Heart right ventricle (tissue), 16 donors: ENCODE measurements at regions of chr15 and their contacts with region 1.

Region 1: DNA sequence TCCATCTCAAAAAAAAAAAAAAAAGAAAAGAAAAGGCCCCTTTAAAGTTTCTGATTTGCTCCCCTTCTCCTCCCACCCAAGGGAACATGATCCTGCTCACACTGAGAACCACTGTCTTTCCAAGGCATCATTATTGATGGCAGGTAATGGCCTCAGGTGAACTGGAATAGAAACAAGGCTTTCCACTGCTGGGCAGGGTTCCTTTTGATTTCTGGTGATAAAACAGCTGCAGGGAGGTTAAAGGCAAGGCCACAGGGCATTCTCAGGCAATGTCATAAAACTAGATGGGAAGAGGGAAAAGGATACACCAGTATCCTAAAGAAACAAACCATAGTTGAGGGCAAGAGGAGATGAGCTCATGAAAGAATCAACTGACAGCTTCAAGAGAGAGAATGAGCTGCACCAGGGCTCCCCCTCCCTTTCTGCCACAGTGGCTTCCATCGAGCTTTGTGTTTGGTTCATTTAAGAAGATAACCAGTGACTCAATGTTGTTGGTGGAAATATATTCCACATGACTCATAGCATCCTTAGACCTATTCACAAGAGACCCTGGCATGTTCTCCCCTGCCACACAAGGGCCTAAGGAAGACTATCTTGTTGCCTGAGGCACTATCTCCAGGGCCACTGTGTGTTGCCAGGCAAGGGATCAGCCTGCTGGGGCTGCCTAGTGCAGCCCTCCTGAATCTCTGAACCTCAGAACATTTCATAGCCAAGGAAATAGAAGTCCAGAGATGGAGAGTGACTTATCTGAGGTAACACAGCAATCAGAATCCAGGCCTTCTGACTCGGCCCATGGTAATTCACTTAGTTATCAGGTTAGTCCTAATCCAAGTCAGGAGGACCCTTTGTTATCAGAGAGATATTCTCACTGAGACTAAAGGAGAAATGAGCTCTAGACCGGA is 86.5 kb downstream of the WDR76 start:
- DNase-seq: peak in 1 of 2 donors; percentile 65
- ATAC-seq: peak; percentile 45 to 96 (median 90)
- H3K4me3 ChIP-seq: no peak overlapping the region
- H3K27ac ChIP-seq: peak overlapping the region in 7 of 10 donors; percentile 26 to 85 (median 63)
- H3K4me1 ChIP-seq: peaks cover 4 to 56% (median 20%) of the 10 kb centered on the region in 9 donors
- H3K27me3 ChIP-seq: no peaks in the 10 kb centered on the region
- CTCF ChIP-seq: no peak

Region 2: GRCh38 chr15:43872416-43873020 is 40.8 kb before region 1 on chr15:
- intact Hi-C with region 1: loop called in 1 of 10 experiments (anchors 1 kb)
- DNase-seq: peak in 1 of 2 donors; percentile 57
- ATAC-seq: peak; percentile 65 to 81 (median 70)
- H3K4me3 ChIP-seq: no peak overlapping the region
- H3K27ac ChIP-seq: peak overlapping the region in 1 of 10 donors; percentile 36
- H3K4me1 ChIP-seq: peaks cover 0 to 53% (median 3%) of the 10 kb centered on the region in 9 donors
- H3K27me3 ChIP-seq: no peaks in the 10 kb centered on the region
- CTCF ChIP-seq: peak in 8 of 9 donors; percentile 18 to 67 (median 62)

Region 3: GRCh38 chr15:43998607-43999006 is 85.3 kb after region 1 on chr15:
- intact Hi-C with region 1: no loop called
- DNase-seq: peak; percentile 21 to 45
- ATAC-seq: peak; percentile 58 to 94 (median 91)
- H3K4me3 ChIP-seq: peak overlapping the region in 4 of 10 donors; percentile 2 to 21 (median 12)
- H3K27ac ChIP-seq: peak overlapping the region in 5 of 10 donors; percentile 1 to 59 (median 54)
- H3K4me1 ChIP-seq: peaks cover 0 to 24% (median 13%) of the 10 kb centered on the region in 9 donors
- H3K27me3 ChIP-seq: no peaks in the 10 kb centered on the region
- CTCF ChIP-seq: no peak

Region 4: GRCh38 chr15:44033894-44034293 is 120.6 kb after region 1 on chr15:
- intact Hi-C with region 1: loop called in 2 of 10 experiments (anchors 10 kb)
- DNase-seq: no peak
- ATAC-seq: no peak
- H3K4me3 ChIP-seq: no peak overlapping the region
- H3K27ac ChIP-seq: no peak overlapping the region
- H3K4me1 ChIP-seq: peaks cover 0 to 32% (median 15%) of the 10 kb centered on the region in 9 donors
- H3K27me3 ChIP-seq: peaks cover 0 to 3% (median 0%) of the 10 kb centered on the region in 7 donors
- CTCF ChIP-seq: no peak

Region 5: DNA sequence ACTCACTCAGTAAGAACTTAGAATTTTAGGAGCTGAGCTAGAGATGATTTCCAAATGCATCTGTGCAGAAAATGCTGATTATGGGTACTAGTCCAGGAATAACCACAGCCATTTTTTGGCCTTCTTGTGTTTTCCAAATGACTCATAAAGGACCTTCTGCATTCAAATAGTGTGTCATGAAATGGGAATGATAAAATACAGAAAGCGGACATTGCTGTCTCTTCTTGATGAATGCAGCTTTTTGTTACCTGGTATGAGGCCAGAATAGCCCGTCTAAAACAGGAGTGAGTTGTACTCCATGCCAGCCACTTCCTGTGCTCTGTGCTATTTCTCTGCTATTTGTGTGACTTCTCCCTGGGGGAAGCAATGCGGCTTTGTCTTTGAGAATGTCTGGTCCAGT is 302.3 kb after region 1 on chr15:
- intact Hi-C with region 1: loop called in 6 of 10 experiments (anchors 5 to 10 kb)
- DNase-seq: no peak
- ATAC-seq: no peak
- H3K4me3 ChIP-seq: no peak overlapping the region
- H3K27ac ChIP-seq: no peak overlapping the region
- H3K4me1 ChIP-seq: no peaks in the 10 kb centered on the region
- H3K27me3 ChIP-seq: peaks cover 0 to 14% (median 3%) of the 10 kb centered on the region in 7 donors
- CTCF ChIP-seq: no peak